Right ventricle myocardium inferior (tissue), 1 donor: ENCODE measurements at regions of chr10 and their contacts with region 1.

Region 1: DNA sequence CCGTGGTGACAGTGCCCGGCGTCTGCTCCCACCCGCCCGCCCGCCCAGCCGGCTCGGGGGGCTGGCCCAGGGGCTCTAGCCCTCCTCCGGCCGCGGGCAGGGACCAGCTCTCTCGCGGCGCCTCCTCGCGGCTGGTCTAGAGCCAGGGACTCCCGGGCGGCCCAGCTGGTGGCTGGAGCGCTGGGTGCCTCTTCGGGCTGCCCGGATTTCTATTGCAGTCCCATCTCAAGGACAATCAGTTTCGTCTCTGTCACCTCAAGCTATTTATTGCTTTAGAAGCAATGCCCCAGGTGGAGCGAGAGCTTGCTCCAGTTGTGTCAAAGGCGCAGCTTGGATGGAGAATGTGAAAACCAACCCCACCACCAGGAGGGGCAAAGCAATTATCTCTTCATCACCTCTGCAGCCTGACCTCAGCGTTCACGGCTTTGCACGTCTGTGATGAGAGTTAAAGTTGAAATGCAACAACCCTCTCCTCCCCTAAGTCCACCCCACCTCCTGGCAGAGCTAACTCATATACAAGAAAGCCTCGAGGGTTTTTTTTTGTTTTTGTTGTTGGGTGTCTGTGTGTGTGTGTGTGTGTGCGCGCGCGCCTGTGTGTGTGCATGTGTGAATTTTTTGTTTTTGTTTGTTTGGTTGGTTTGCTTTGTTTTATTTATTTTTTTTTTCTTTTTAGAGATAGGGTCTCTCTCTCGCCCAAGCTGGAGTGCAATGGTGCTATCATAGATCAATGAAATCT is at the start of gene ITGA8:
- DNase-seq: no peak
- ATAC-seq: peak; percentile 60
- total RNA-seq, gene ITGA8: 1.7 TPM

Region 2: GRCh38 chr10:15585303-15585715 is 134.8 kb before region 1 on chr10:
- intact Hi-C with region 1: loop called (anchors 5 kb)
- DNase-seq: peak; percentile 71
- ATAC-seq: peak; percentile 42

Region 3: GRCh38 chr10:15824498-15824897 is 104.4 kb after region 1 on chr10:
- intact Hi-C with region 1: loop called (anchors 5 kb)
- DNase-seq: no peak
- ATAC-seq: no peak